A673 (cell line): ENCODE measurements at regions of chr14 and their contacts with region 1.

Region 1: DNA sequence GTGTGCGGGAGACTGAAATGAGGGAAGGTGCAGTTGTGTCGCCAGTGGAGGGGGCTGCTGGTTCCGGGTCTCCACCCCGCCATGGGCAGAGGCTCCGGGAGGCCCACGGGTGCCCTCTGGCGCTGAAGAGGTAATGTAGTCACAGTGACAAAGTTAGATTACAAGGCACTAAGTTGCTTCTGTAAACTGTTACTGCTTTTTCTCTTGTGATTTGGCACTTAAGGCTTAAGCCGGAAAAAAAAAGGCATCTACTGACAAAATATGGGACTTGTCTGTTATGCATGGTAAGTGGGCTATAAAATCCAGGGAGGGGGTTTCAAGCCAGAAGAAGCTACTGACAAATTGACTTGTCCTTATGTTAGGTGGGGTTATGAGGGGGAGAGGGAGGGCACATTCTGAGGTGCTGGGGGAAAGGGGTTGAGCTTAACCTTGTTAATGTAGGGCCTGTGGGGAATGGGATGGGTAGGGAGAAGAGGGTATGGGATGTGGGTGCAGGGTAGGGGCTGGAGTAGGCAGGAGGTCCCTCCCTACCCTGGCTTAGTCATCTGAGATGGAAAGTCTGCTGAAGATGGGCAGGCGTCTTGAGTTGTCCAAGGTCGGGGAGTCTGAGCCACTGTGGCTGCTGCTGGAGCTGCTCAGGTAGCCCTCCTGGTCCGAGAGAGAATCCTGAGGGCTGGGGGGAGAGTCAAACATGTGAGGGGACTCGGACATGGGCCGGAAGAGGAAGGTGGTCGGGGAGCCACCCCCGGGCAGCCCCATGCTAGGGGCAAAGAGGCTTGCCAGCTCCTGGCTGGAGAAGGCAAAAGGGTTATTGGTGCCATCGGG is 3.7 kb downstream of the ZFP36L1 start:
- DNase-seq: peak; percentile 93
- H3K4me3 ChIP-seq: peak overlapping the region; percentile 74
- H3K27ac ChIP-seq: peak overlapping the region; percentile 55
- H3K4me1 ChIP-seq: peaks cover 29% of the 10 kb centered on the region
- H3K27me3 ChIP-seq: no peaks in the 10 kb centered on the region
- CTCF ChIP-seq: peak; percentile 86

Region 2: DNA sequence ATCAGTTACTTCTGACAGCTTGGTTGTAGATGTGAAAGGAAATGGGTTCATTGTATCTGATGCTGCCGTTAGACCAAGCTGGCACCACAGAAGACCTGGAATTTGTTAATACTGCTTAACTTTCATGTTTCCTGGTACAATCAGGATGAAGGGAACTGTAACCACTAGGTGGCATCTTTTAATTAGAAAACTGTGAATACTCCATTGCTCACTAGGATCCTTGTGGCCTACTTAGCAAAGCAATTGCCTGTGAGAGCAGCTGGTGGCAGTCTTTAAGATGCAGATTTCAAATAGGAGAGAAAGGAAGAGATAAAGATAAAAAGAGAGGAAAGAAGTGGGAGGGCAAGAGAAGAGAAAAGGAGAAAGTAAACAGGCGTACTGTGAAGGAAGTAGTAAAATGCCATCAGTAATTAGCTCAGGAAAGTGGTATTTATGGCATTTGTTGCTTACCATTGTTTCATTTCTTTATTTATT is 855.2 kb before region 1 on chr14:
- CTCF ChIA-PET with region 1: interaction called, 10 read pairs
- POLR2A ChIA-PET with region 1: no interaction called
- intact Hi-C with region 1: no loop called
- DNase-seq: peak; percentile 94
- H3K4me3 ChIP-seq: no peak overlapping the region
- H3K27ac ChIP-seq: no peak overlapping the region
- H3K4me1 ChIP-seq: peaks cover 23% of the 10 kb centered on the region
- H3K27me3 ChIP-seq: peaks cover 12% of the 10 kb centered on the region
- CTCF ChIP-seq: peak; percentile 85

Region 3: GRCh38 chr14:68349900-68350629 is 439.1 kb before region 1 on chr14:
- CTCF ChIA-PET with region 1: no interaction called
- POLR2A ChIA-PET with region 1: no interaction called
- intact Hi-C with region 1: loop called (anchors 5 kb)
- DNase-seq: peak; percentile 94
- H3K4me3 ChIP-seq: no peak overlapping the region
- H3K27ac ChIP-seq: no peak overlapping the region
- H3K4me1 ChIP-seq: peaks cover 20% of the 10 kb centered on the region
- H3K27me3 ChIP-seq: no peaks in the 10 kb centered on the region
- CTCF ChIP-seq: no peak

Region 4: DNA sequence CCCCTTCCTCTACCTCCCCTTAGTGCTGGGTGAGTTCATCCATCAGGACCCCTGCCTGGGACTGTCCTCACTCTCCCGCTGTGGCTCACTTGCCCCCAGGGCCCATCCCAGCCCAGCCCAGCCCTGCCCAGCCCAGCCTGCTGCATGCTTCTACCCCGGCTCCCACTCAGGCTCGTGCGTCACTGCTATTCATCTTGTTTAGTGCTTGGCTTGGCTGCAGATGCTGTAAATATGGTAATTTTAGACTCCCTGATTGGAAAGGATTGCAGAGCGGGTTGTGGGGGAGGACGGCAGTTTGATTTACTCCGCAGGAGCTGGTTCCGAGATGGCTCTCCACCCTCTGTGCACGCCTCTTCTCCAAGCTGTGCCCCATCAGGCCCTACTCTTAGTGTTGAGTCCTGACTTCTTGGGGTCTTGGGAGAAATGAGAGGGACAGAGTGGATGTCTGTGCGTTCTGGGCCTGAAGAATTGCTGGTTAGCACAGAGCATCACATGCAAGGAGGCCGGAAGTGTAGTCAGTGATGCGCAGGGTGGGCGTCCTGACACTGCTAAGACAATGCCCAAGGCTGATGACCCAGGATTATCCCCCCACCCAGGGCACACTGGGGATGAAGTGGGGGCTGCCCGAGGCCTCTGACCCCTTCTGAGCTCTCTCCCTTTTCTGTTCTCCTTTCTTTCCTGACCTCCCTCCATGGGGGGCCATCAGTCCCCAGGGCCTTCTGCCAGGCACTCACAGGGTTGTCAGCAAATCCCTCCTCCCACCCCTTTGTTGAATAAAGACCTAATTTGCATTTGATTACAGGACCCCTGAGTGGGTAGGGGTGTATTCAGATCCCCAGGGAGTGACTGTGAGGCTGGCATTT is 240.8 kb before region 1 on chr14:
- CTCF ChIA-PET with region 1: interaction called, 4 read pairs
- POLR2A ChIA-PET with region 1: interaction called, 5 read pairs
- intact Hi-C with region 1: loop called (anchors 5 kb)
- DNase-seq: peak; percentile 97
- H3K4me3 ChIP-seq: no peak overlapping the region
- H3K27ac ChIP-seq: peak overlapping the region; percentile 95
- H3K4me1 ChIP-seq: peaks cover 62% of the 10 kb centered on the region
- H3K27me3 ChIP-seq: no peaks in the 10 kb centered on the region
- CTCF ChIP-seq: no peak

Region 5: GRCh38 chr14:68759937-68760336 is 29.3 kb before region 1 on chr14:
- CTCF ChIA-PET with region 1: no interaction called
- POLR2A ChIA-PET with region 1: interaction called, 14 read pairs
- intact Hi-C with region 1: no loop called
- DNase-seq: no peak
- H3K4me3 ChIP-seq: no peak overlapping the region
- H3K27ac ChIP-seq: no peak overlapping the region
- H3K4me1 ChIP-seq: no peaks in the 10 kb centered on the region
- H3K27me3 ChIP-seq: no peaks in the 10 kb centered on the region
- CTCF ChIP-seq: no peak